ENCODE measurements at regions of chr1 and their contacts with region 1.

Region 1: DNA sequence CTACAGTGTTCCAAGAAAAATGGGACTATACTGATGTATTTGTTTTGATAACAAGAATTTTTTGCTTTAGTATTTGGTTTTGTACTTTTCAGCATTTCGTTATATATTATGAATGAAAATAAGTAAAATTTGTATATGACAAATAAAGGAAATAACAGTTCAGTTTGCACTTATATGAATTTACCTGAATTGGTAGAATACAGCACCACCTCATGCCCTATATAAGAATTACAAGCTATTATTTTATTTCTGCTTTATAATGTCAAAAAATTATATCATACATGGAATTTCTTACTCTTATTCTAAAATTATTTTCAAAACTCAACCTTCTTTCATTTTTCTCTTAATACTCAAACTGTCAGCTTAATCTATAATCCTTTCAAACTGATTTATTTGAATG is 14.6 kb downstream of the EFCAB7 start:
- DNase-seq: no peak
- H3K4me3 ChIP-seq: no peak overlapping the region
- H3K27ac ChIP-seq: no peak overlapping the region
- H3K4me1 ChIP-seq: no peaks in the 10 kb centered on the region
- H3K27me3 ChIP-seq: no peaks in the 10 kb centered on the region
- CTCF ChIP-seq: peak in 1 of 3 experiments; percentile 4

Region 2: GRCh38 chr1:62841587-62842169 is 696.3 kb before region 1 on chr1:
- intact Hi-C with region 1: loop called (anchors 5 kb)
- DNase-seq: no peak
- H3K4me3 ChIP-seq: no peak overlapping the region
- H3K27ac ChIP-seq: no peak overlapping the region
- H3K4me1 ChIP-seq: no peaks in the 10 kb centered on the region
- H3K27me3 ChIP-seq: no peaks in the 10 kb centered on the region
- CTCF ChIP-seq: peak in 2 of 3 experiments; percentile 61 to 69

Measured in ascending aorta (tissue), 2 donors.